ENCODE measurements at regions of chrX and their contacts with region 1.

Region 1: DNA sequence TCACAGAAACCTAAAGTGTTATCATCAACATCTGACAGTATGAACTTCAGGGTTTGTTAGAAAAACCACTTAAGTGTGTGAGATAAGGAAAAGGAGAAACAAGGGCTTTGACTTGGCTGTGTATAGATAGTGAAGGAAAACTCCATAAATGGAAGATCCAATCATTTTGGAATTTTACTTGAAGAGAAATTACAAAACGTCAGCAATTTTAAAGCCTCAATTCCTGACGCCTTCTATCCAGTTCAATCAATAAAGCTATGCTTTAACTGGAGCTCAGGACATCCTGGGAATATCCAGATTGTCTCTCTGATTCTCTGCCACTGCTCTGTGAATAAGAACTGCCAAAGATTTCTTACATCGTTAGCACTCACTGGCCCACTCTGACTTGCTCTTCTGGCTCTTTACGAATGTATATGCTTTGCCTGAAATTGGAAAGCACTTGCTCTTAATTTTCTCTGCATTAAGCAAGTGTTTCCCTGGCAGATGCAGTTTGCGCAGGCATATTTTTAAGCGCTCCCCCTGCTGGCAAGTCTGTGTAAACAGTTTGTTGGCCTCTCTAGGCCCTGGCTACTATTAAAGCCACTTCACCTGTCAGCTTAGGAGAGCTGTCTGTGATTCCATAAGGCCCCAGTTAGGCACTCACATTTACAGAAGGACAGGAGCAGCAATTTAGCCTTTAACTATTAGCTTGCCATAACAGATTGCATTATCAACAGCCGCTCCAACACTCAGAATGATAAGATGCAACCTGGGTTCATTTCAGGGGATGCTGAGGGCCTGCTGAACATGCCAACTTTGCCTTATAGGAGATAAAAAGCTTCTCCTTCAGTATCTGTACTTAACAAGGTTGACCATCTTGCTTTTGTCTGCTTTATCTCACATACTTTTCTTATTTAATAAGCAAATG is 251.4 kb upstream of the DDX53 start:
- H3K4me3 ChIP-seq: no peak overlapping the region
- H3K27ac ChIP-seq: no peak overlapping the region
- H3K4me1 ChIP-seq: no peaks in the 10 kb centered on the region
- CTCF ChIP-seq: no peak

Region 2: GRCh38 chrX:22758807-22759481 is 10.6 kb after region 1 on chrX:
- CTCF ChIA-PET with region 1: interaction called, 12 read pairs
- POLR2A ChIA-PET with region 1: no interaction called
- H3K4me3 ChIP-seq: no peak overlapping the region
- H3K27ac ChIP-seq: no peak overlapping the region
- H3K4me1 ChIP-seq: no peaks in the 10 kb centered on the region
- CTCF ChIP-seq: no peak

Measured in HEK293 (cell line).